OCI-LY7 (cell line): ENCODE measurements at regions of chr9 and their contacts with region 1.

Region 1: DNA sequence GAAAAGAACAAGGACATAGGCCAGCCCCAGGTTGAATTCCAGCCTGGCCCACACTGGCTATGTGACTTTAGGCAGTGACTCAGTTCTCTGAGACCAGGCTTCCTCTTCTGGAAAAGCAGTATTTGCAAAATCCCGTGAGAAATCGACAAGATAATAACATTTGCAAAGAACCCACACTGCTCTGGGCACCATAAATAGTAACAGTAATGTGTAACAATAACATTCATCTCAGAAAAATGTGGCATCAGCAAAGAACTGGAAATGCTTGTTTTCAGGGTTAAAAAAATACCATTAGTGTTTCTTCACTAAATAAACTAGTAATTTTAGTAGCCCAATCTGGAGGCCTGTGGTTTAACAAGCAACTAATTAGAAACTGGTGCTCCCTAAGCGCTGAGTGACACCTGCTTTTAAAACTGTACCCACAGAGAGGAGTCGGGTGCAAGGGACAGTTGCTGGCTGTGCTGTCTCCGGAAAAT is 148.4 kb downstream of the TTLL11 start:
- DNase-seq: peak; percentile 81
- H3K4me3 ChIP-seq: peak overlapping the region; percentile 48
- H3K27ac ChIP-seq: peak overlapping the region; percentile 99
- H3K4me1 ChIP-seq: peaks cover 98% of the 10 kb centered on the region
- CTCF ChIP-seq: no peak

Region 2: GRCh38 chr9:120928483-120929228 is 1016.1 kb before region 1 on chr9:
- CTCF ChIA-PET with region 1: no interaction called
- POLR2A ChIA-PET with region 1: no interaction called
- intact Hi-C with region 1: loop called (anchors 10 kb)
- DNase-seq: peak; percentile 87
- H3K4me3 ChIP-seq: peak overlapping the region; percentile 74
- H3K27ac ChIP-seq: peak overlapping the region; percentile 96
- H3K4me1 ChIP-seq: peaks cover 97% of the 10 kb centered on the region
- CTCF ChIP-seq: no peak

Region 3: DNA sequence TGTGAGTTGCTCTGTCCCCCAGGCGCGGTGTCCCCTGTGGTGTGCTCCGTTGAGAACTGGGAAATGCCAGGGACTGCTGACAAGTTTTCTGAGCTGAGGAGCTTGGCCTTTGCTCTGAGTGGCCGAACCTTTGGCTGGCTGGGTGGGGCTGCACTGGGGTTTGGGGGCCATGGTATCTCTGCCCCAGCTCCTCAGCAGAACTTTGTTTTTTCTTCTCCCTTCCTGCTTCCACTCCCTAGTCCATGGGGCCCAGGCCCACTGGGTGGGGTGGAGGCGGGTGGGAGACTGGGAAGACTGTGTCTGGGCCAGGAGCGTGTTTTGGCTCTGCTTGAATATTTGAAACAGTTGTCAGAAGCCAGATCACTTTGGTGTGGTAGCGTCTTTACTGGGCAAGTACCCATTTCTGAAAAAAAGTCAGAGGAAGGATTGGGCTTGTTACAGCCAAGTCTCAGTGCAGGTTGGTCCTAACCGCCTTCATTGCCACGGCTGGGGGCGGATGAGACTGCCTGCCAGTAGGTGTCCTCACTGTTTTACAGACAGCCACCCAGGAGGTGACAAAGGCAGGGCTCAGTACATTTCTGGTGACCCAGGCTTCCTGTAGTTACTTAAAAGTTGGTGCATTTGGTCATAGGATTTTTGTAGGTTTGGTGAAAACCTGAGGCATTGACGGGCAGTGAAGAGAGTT is 200.6 kb before region 1 on chr9:
- CTCF ChIA-PET with region 1: interaction called, 4 read pairs
- POLR2A ChIA-PET with region 1: no interaction called
- intact Hi-C with region 1: loop called (anchors 1 kb)
- DNase-seq: peak; percentile 89
- H3K4me3 ChIP-seq: no peak overlapping the region
- H3K27ac ChIP-seq: no peak overlapping the region
- H3K4me1 ChIP-seq: peaks cover 54% of the 10 kb centered on the region
- CTCF ChIP-seq: peak; percentile 97

Region 4: DNA sequence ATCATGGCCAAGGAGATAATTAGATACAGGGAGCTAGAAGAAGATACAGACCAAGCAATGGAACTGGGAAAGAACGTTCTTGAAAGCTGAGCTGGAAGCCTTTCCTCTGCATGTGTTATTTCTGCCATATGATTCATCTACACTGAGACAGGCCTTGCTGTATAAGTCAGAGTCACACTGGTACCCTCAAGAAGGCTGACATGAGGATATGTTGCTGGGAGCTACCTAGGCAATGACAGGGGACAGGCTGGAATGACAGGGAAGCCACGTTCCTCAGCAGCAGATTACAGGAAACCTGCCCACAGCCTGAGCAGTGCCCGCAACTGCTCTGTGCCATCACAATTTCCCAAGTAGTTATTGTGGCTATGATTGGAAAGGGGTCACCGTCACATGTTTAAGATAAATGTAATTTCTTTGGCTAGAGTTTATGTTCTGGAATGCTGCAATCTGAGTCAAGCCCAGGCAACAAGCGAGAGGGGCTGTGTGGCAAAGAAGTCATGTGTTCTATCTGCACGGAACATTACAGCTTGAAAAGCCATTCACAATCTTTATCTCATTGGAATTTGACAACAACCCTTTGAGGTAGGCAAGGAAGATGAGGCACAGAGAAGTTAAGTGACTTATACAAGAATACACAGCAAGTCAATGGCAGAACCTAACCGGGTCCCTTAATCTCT is 40.1 kb after region 1 on chr9:
- CTCF ChIA-PET with region 1: interaction called, 3 read pairs
- POLR2A ChIA-PET with region 1: interaction called, 12 read pairs
- intact Hi-C with region 1: no loop called
- DNase-seq: no peak
- H3K4me3 ChIP-seq: no peak overlapping the region
- H3K27ac ChIP-seq: no peak overlapping the region
- H3K4me1 ChIP-seq: peaks cover 24% of the 10 kb centered on the region
- CTCF ChIP-seq: no peak